ENCODE measurements at regions of chr5 and their contacts with region 1.

Region 1: DNA sequence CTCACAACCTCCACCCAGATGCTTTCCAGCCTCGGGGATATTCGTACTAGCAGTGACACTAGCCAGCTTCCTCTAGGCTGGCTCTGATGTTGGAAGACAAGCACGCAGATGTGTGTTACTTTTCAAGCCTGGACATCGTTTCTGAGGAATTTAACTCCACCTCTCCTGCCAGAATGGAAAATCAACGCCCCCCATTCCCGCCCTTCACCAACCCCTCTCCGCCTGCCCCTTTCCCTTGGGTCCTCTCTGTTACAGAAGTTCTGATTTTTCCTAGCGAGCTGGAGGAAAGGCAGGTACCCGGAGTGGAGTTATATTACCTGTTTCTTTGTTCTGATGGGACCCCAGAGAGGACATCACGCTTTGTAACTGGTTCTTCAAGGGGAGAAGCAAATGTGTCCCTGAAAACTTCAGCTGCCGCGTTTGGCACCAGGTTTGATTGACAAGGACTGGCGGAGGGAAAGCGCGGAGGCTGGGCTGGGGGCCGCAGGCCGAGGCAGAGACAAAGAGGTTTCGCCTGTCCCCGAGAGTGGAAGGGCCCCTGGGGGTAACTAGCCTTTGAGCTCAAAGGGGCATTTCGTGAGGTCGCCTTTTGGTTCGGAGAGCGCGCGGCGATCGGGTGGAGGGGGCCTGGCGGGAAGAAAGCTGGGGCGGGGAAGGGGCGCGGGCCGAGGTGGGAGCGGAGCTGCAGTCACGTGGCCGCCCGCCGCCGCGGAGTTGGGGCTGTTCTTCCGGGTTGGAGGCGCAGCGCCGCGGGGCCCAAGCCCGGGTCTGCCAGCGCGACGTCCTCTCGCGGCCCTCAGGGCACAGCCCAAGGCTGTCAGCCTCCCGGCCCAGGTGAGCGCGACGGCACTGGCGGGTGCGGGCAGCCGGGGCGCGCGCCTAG is at the start of gene NNT:
- DNase-seq: peak; percentile 74
- H3K4me3 Mint-ChIP-seq: peak within 1 kb of the TSS; percentile 87
- H3K27ac Mint-ChIP-seq: peak within 1 kb of the TSS; percentile 92
- H3K4me1 Mint-ChIP-seq: peaks cover 45% of the 10 kb centered on the region
- H3K27me3 Mint-ChIP-seq: no peaks in the 10 kb centered on the region
- total RNA-seq, gene NNT: 98.4 to 98.9 TPM

Region 2: GRCh38 chr5:42908509-42909488 is 693.9 kb before region 1 on chr5:
- CTCF ChIA-PET with region 1: no interaction called
- intact Hi-C with region 1: loop called (anchors 5 kb)
- DNase-seq: peak; percentile 94
- H3K4me3 Mint-ChIP-seq: peak overlapping the region; percentile 92
- H3K27ac Mint-ChIP-seq: peak overlapping the region; percentile 75
- H3K4me1 Mint-ChIP-seq: peaks cover 10% of the 10 kb centered on the region
- H3K27me3 Mint-ChIP-seq: peaks cover 10% of the 10 kb centered on the region

Region 3: GRCh38 chr5:43008369-43009153 is 594.1 kb before region 1 on chr5:
- CTCF ChIA-PET with region 1: no interaction called
- intact Hi-C with region 1: loop called (anchors 5 kb)
- DNase-seq: peak; percentile 93
- H3K4me3 Mint-ChIP-seq: peak overlapping the region; percentile 79
- H3K27ac Mint-ChIP-seq: peak overlapping the region; percentile 97
- H3K4me1 Mint-ChIP-seq: peaks cover 24% of the 10 kb centered on the region
- H3K27me3 Mint-ChIP-seq: no peaks in the 10 kb centered on the region

Region 4: GRCh38 chr5:43019614-43020293 is 582.9 kb before region 1 on chr5:
- CTCF ChIA-PET with region 1: no interaction called
- intact Hi-C with region 1: no loop called
- DNase-seq: peak; percentile 90
- H3K4me3 Mint-ChIP-seq: peak overlapping the region; percentile 97
- H3K27ac Mint-ChIP-seq: peak overlapping the region; percentile 99
- H3K4me1 Mint-ChIP-seq: peaks cover 37% of the 10 kb centered on the region
- H3K27me3 Mint-ChIP-seq: no peaks in the 10 kb centered on the region

Region 5: GRCh38 chr5:43514816-43515677 is 87.7 kb before region 1 on chr5 and contains the start of gene C5orf34:
- CTCF ChIA-PET with region 1: no interaction called
- intact Hi-C with region 1: loop called (anchors 1 kb)
- DNase-seq: peak; percentile 98
- H3K4me3 Mint-ChIP-seq: peak within 1 kb of the TSS; percentile 94
- H3K27ac Mint-ChIP-seq: peak within 1 kb of the TSS; percentile 99
- H3K4me1 Mint-ChIP-seq: peaks cover 25% of the 10 kb centered on the region
- H3K27me3 Mint-ChIP-seq: no peaks in the 10 kb centered on the region
- total RNA-seq, gene C5orf34: 14.7 to 16.3 TPM

Region 6: GRCh38 chr5:43772764-43773477 is 170.2 kb after region 1 on chr5:
- CTCF ChIA-PET with region 1: no interaction called
- intact Hi-C with region 1: loop called (anchors 2 kb)
- DNase-seq: no peak
- H3K4me3 Mint-ChIP-seq: no peak overlapping the region
- H3K27ac Mint-ChIP-seq: peak overlapping the region; percentile 82
- H3K4me1 Mint-ChIP-seq: peaks cover 21% of the 10 kb centered on the region
- H3K27me3 Mint-ChIP-seq: no peaks in the 10 kb centered on the region

Region 7: GRCh38 chr5:44808435-44809214 is 1205.9 kb after region 1 on chr5 and contains the start of gene MRPS30:
- CTCF ChIA-PET with region 1: no interaction called
- intact Hi-C with region 1: loop called (anchors 2 kb)
- DNase-seq: peak; percentile 96
- H3K4me3 Mint-ChIP-seq: peak within 1 kb of the TSS; percentile 96
- H3K27ac Mint-ChIP-seq: peak within 1 kb of the TSS; percentile 95
- H3K4me1 Mint-ChIP-seq: peaks cover 16% of the 10 kb centered on the region
- H3K27me3 Mint-ChIP-seq: peaks cover 1% of the 10 kb centered on the region
- total RNA-seq, gene MRPS30: 46.1 to 49.3 TPM

Measured in activated naive CD4-positive, alpha-beta T cell treated with anti-CD3 and anti-CD28 coated beads for 36 hours (primary cell).